ENCODE measurements at regions of chr5 and their contacts with region 1.

Region 1: DNA sequence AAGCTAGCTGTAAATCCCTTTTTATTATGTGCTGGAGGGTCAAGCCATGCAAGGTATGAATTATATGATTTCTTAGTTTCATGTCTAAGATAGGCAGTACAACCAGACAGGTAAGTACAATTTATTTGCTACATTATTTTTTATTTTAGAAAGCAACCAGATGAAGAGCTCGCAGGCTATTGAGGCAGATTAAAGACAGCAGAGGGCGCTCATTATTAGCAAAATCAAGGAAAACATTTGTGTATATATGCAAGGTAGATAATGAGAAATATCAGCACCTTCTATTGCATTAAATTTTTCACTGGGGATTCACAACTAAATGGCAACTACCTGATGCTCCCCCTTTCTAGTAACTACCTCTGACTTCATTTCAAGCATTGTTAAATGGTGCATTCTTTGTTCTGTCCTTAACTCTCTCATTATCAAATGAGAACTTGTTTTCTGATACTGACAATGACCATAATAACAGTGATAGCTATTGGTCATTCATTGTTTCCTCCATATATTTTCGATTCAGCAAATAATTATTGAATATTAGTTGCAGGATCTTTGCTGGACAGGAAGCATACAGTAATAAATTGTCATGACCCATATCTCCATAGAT is 8.6 kb downstream of the SCGB3A2 start:
- DNase-seq: peak; percentile 31
- H3K4me3 ChIP-seq: no peak overlapping the region
- H3K27ac ChIP-seq: no peak overlapping the region
- H3K4me1 ChIP-seq: no peaks in the 10 kb centered on the region
- H3K27me3 ChIP-seq: no peaks in the 10 kb centered on the region
- CTCF ChIP-seq: peak; percentile 42

Region 2: DNA sequence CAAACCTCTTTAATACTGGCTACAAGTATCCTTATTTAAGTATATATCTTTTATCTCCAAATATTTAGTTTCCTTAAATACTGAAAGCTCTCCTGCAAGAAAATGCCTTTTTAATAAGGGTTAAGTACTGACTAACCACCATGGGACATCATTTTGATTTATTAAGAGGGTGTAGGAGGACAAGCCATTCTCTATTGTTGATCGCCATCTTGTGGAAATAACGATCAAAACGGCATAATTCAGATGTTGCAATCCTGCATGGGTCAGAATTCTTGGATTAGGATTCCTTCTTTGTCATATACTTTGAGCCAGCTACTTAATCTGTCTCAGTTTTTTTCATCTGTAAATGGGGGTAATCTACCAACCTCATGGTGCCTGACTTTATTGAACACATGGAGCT is 47.9 kb after region 1 on chr5:
- intact Hi-C with region 1: loop called (anchors 5 kb)
- DNase-seq: no peak
- H3K4me3 ChIP-seq: no peak overlapping the region
- H3K27ac ChIP-seq: no peak overlapping the region
- H3K4me1 ChIP-seq: no peaks in the 10 kb centered on the region
- H3K27me3 ChIP-seq: no peaks in the 10 kb centered on the region
- CTCF ChIP-seq: peak; percentile 33